GM10248 (cell line): ENCODE measurements at regions of chr12 and their contacts with region 1.

Region 1: GRCh38 chr12:15532364-15532977 is 210.2 kb downstream of the PTPRO start:
- DNase-seq: peak; percentile 47
- CTCF ChIP-seq: peak; percentile 64

Region 2: DNA sequence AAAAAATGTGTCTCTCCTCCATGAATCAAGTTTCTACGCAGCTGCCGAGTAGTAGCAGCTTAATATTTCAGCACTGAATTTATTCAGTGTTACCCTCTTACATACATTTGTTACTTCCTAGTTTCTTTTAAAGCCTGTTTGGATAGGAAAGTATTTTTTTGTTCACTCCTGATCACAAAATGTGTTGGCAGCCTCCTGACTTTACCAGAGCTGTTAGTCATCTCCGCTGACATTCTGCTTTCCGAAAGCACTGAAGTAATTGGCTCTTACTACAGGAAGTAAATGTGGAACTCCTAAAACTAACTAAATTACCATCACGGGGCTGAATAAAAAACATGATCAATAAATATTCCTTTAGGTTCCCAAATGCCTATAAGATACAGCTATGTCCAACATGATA is 31.2 kb after region 1 on chr12:
- CTCF ChIA-PET with region 1: interaction called, 41 read pairs
- POLR2A ChIA-PET with region 1: no interaction called
- DNase-seq: no peak
- CTCF ChIP-seq: no peak

Region 3: GRCh38 chr12:15856097-15856982 is 323.9 kb after region 1 on chr12:
- CTCF ChIA-PET with region 1: interaction called, 41 read pairs
- POLR2A ChIA-PET with region 1: no interaction called
- DNase-seq: peak; percentile 29
- CTCF ChIP-seq: peak; percentile 71